Spleen (tissue), 13 donors: ENCODE measurements at regions of chr10 and their contacts with region 1.

Region 1: DNA sequence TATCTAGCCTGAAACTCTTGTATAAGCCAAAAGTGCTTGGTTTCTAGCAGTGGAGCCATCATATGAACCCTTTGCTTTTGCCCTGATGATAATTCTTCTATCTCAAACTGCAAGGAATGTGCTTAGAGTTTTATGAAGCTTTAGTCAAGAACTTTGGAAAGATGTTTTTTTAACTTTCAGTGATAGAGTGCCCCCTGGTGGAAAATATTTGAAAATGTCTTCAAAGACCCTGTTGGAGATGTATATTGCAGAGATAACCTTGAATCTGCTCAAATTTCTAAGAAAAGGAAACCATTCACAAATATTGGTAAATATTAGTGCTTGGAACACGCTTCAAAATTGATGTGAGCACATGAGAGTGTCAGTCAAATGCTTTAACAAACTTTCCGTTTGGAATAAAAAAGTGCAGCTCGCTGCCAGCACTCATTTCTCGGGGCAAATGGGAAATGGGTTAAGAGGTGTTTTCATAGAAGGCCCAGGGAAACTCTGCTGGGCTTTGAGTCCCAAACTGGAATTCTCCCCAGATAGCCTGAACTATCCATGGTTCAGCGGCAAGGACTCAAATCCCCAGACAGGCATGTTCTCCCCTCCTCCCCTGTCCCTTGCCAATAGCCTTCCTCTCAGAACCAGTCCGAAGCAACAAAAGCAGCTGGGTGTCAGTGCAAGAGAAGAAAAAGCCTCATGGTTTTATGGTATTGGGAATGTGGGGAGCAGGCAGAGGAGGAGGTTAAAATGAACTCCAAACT is 129.3 kb downstream of the MYOF start:
- DNase-seq: no peak
- H3K4me3 ChIP-seq: no peak overlapping the region
- H3K27ac ChIP-seq: no peak overlapping the region
- H3K4me1 ChIP-seq: no peaks in the 10 kb centered on the region
- H3K27me3 ChIP-seq: peaks cover 0 to 9% (median 0%) of the 10 kb centered on the region in 7 donors
- CTCF ChIP-seq: peak in 10 of 11 experiments; percentile 38 to 82 (median 66)
- POLR2A ChIP-seq: no peak

Region 2: DNA sequence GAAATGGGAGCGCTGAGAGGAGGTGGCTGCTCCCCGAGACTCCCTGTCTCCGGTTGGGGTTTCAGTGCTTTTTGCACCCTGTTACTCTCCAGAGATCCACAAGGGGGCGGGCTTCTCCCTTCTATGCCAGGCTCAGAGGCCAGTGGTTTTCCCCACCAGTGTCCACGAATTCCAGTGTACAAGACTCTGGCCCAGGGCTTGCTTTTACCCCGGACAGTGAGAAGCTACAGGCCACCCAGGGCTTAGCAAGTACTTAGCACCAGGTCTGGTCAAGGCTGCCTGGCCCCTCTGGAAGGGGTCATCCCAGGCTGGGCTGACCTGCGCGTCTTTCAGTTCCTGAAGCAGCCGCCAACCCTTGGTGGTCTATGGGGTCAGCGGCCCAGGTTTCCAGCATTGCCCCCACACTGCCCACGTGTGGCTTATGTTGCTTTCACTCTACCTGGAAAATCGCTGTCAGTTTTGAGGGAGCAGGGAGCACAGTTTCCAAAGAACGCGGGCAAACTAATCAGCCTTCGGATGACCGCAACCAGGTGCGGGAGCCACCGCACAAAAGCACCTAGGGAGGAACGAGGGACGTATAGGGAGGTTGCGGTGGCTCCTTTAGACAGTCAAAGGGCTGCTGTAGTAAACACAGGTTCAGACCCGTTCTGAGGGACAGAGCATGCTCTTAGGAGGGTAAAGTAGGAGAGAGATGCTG is 272.3 kb before region 1 on chr10:
- intact Hi-C with region 1: loop called (anchors 2 kb)
- DNase-seq: peak; percentile 82
- H3K4me3 ChIP-seq: no peak overlapping the region
- H3K27ac ChIP-seq: no peak overlapping the region
- H3K4me1 ChIP-seq: peaks cover 0 to 13% (median 7%) of the 10 kb centered on the region in 6 donors
- H3K27me3 ChIP-seq: peaks cover 0 to 69% (median 29%) of the 10 kb centered on the region in 7 donors
- CTCF ChIP-seq: peak; percentile 33 to 87 (median 75)
- POLR2A ChIP-seq: no peak

Region 3: DNA sequence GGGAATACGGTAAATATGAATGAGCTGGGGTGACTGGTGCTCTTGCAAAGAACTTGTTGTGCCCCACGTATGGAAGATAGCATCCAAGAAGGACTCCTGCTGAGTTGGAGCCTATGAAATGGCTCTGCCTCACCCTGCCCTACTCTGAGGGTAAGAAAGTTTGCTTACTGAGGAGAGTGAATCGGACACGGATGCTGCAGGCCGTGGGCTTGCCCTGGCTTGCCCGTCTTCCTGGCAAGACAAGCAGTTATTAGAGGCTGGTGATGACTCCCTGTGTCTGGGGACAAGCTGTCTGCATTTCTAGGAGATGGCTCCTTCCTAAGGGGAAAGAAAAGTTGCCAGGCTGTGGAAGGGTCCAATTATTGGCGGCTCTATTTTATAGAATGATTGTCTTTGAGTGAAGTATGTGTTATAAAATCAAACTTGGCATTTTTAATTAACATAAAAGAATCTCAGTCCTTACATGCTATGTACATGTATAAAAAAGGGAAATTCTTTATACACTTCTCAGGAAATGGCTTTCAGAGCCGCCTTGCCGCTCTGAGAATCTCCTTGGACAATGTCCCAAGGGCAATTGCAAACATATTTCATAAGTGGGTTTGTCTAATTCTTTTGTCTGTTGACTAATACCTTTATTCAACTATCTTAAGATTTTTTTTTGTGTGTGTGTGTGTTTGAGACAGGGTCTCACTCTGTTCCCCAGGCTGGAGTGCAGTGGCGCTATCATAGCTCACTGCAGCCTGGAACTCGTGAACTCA is 214.5 kb before region 1 on chr10:
- intact Hi-C with region 1: no loop called
- DNase-seq: no peak
- H3K4me3 ChIP-seq: no peak overlapping the region
- H3K27ac ChIP-seq: no peak overlapping the region
- H3K4me1 ChIP-seq: no peaks in the 10 kb centered on the region
- H3K27me3 ChIP-seq: peaks cover 0 to 26% (median 0%) of the 10 kb centered on the region in 7 donors
- CTCF ChIP-seq: no peak
- POLR2A ChIP-seq: no peak

Region 4: DNA sequence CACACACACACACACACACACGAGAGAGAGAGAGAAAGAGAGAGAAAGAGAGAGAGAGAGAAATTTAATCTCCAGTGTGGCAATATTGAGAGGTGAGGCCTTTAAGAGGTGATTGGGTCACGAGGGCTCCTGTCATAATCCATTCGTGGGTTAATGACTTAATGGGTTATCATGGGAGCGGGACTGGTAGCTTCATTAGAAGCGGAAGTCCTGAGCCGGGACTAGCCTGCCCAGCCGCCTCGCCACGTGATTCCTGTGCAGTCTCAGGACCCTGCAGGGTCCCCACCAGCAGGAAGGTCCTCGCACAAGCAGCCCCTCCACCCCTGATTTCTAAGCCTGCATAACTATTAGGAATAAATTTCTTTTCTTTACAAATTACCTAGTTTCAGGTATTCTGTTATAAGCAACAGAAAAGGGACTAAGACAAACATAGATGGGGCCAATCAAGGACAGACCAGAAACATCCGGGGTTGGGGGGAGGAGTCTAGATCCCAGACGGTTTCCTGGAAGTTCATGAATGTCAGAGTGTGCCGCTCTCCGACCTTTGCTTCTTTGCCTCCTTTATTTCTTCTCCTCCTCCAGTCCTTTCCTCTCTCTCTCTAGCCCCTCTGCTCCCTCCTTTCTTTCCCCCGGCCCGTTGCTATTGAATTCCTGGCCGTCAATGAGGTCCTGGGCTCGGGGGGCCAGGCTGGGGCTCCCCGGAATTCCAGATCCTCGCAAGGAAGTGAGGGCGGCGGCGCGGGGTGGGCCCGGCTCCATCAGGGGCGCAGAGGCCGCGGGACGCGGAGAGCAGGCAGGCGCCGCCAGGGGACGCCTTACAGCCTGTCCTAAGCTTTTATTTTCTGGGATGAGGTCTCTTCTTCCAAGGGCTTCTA is 132.3 kb before region 1 on chr10:
- intact Hi-C with region 1: no loop called
- DNase-seq: no peak
- H3K4me3 ChIP-seq: no peak overlapping the region
- H3K27ac ChIP-seq: peak overlapping the region in 1 of 8 donors; percentile 37
- H3K4me1 ChIP-seq: peaks cover 0 to 3% (median 0%) of the 10 kb centered on the region in 6 donors
- H3K27me3 ChIP-seq: peaks cover 0 to 11% (median 0%) of the 10 kb centered on the region in 7 donors
- CTCF ChIP-seq: no peak
- POLR2A ChIP-seq: no peak